ENCODE measurements at regions of chr9 and their contacts with region 1.

Region 1: GRCh38 chr9:13744261-13744901 is 464.9 kb upstream of the MPDZ start:
- DNase-seq: no peak
- H3K4me3 ChIP-seq: no peak overlapping the region
- H3K27ac ChIP-seq: no peak overlapping the region
- H3K4me1 ChIP-seq: no peaks in the 10 kb centered on the region
- H3K27me3 ChIP-seq: no peaks in the 10 kb centered on the region
- CTCF ChIP-seq: no peak

Region 2: DNA sequence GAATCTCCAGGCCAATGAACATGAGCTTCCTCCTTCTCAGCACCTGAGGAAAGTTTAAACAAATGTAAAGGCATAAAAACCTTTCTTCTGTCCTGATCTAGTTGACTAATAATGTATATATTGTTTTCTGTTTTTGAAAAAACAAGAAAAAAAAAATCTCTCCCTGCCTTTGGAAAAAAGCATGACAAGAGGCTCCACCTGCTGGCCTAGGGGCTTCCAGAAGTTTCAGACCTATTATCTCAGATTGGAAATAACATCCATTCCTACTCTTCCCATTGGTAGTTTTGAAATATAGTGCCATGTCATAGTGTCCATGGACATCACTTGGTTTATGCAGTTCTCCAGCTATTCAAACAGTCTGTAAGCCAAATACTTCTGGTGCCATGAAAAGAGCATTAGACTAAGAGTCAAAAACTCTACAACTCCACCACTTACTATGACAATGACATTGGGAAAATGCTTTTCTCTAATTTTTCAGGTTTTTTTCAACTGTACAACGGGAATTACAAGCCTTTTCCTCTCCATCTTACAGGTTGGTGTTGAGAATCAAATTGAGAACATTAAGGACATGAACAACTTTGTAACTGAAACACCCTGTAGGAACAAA is 55.3 kb before region 1 on chr9:
- intact Hi-C with region 1: loop called (anchors 10 kb)
- DNase-seq: no peak
- H3K4me3 ChIP-seq: no peak overlapping the region
- H3K27ac ChIP-seq: no peak overlapping the region
- H3K4me1 ChIP-seq: no peaks in the 10 kb centered on the region
- H3K27me3 ChIP-seq: no peaks in the 10 kb centered on the region
- CTCF ChIP-seq: no peak